ENCODE measurements at regions of chr7 and their contacts with region 1.

Region 1: DNA sequence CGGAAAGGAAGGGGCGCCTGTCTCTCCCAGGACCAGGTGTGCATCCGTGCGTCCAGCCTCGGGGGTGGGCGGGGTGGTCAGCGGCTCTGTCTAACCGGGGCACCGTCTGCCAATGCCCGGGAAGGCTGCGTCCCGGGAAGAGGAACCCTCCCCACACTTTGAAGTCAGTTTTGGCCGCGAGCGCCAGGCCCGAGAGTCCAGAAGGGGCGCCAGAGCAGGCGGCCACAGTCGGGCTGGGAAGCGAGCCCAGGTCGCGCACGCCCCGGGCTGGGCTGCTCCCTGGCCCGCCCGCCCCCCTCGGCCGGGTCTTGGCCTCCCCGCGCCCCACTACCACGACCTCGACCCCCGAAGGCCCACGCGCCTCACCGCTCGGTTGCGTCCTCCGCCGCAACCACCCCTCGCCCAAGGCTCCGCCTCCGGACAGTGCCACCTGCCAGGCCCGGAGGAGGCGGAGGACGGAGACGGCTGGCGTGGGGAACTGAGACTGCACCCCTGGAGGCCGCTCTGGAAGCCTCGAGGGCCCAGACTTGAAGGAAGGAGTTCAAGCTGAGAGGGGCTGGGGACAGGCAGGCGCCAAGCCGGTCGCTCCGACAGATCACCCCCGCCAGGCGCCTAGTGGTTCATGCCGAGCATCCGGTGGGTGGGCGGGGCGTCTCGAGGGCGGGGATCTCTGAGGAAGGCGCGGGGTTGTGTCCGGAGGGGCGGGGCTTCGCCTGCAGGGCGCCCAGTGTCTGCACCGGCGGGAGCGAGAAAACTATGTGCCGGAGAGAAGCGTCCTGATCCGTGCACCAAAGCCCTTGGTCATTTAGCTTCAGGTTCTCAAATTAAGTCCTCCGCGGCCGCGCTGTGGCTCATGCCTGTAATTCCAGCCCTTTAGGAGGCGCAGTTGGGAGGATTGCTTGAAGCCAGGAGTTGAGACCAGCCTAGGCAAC is at the start of gene BRAT1:
- DNase-seq: peak; percentile 98 to 99
- H3K4me3 ChIP-seq: peak within 1 kb of the TSS; percentile 65 to 83 (median 80)
- H3K27ac ChIP-seq: peak within 1 kb of the TSS; percentile 97 to 99 (median 98)
- H3K4me1 ChIP-seq: peaks cover 17 to 26% of the 10 kb centered on the region in 2 donors
- H3K27me3 ChIP-seq: no peaks in the 10 kb centered on the region
- CTCF ChIP-seq: peak in 4 of 6 experiments; percentile 6 to 51 (median 20)
- POLR2A ChIP-seq: peak in 1 of 2 donors; percentile 68
- total RNA-seq, gene BRAT1: 37.2 to 51.8 (median 45.6) TPM

Region 2: DNA sequence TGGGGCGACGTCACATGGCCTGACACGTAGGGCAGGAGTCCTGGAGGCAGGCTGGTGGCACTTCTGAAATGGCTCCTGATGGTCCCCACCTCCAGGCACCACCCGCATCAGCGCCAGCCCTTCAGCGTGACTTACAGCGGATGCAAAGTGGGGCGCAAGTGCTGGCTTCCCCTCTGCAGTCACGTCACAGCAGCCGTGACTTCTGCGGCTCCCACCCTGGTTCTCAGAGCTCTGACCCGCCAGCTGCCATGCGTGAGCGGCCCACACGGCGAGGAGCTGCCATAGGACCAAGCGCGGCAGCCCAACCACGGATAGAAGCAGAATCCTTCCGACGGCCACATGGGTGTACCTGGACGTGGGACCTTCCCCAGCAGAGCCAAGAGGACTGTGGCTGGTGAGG is 726.3 kb before region 1 on chr7:
- intact Hi-C with region 1: no loop called
- DNase-seq: no peak
- H3K4me3 ChIP-seq: no peak overlapping the region
- H3K27ac ChIP-seq: no peak overlapping the region
- H3K4me1 ChIP-seq: no peaks in the 10 kb centered on the region
- H3K27me3 ChIP-seq: no peaks in the 10 kb centered on the region
- CTCF ChIP-seq: no peak
- POLR2A ChIP-seq: no peak

Region 3: DNA sequence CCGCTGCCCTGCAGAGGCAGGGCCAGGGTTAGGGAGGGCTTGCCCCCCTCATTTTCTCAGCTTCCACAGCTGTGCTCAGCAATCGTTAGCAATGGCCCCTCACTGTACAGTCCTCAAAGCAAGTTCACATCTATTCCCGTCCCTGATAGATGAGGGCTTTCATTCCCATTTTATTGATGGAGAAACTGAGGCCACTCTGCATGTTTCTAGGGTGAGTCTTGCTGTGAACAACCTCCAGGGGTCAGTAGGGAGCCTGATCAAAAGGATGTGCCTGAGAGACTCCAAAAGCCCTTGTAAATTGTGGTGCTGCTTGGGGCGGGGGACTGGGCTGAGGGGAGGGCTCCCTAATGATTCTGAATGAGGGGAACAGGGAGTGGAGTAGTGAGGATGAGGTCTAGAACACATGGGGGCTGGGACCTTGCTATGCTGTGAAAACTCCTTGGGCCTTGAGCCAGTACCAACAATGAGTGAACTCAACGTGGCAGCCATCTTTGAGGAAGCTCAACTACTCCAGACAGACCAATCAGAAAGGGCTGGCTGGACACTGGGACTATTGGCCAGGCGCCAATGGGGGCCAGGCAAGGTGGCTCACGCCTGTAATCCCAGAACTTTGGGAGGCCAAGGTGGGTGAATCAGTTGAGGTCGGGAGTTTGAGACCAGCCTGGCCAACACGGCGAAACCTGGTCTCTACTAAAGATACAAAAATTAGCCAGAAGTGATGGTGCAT is 72.5 kb before region 1 on chr7:
- intact Hi-C with region 1: loop called (anchors 5 kb)
- DNase-seq: no peak
- H3K4me3 ChIP-seq: no peak overlapping the region
- H3K27ac ChIP-seq: no peak overlapping the region
- H3K4me1 ChIP-seq: peaks cover 0 to 18% of the 10 kb centered on the region in 2 donors
- H3K27me3 ChIP-seq: no peaks in the 10 kb centered on the region
- CTCF ChIP-seq: no peak
- POLR2A ChIP-seq: no peak

Region 4: GRCh38 chr7:2641406-2642393 is 86.3 kb after region 1 on chr7:
- intact Hi-C with region 1: loop called (anchors 5 kb)
- DNase-seq: peak; percentile 99
- H3K4me3 ChIP-seq: no peak overlapping the region
- H3K27ac ChIP-seq: peak overlapping the region; percentile 95 to 98 (median 98)
- H3K4me1 ChIP-seq: peaks cover 42 to 78% of the 10 kb centered on the region in 2 donors
- H3K27me3 ChIP-seq: no peaks in the 10 kb centered on the region
- CTCF ChIP-seq: peak in 2 of 6 experiments; percentile 6 to 31
- POLR2A ChIP-seq: peak in 1 of 2 donors; percentile 62

Region 5: GRCh38 chr7:2844165-2844898 is 288.9 kb after region 1 on chr7 and contains the start of gene GNA12:
- intact Hi-C with region 1: loop called (anchors 10 kb)
- DNase-seq: peak; percentile 100
- H3K4me3 ChIP-seq: peak within 1 kb of the TSS in 2 of 3 donors; percentile 29 to 85
- H3K27ac ChIP-seq: peak within 1 kb of the TSS in 1 of 3 donors; percentile 36
- H3K4me1 ChIP-seq: peaks cover 8 to 13% of the 10 kb centered on the region in 2 donors
- H3K27me3 ChIP-seq: no peaks in the 10 kb centered on the region
- CTCF ChIP-seq: no peak
- POLR2A ChIP-seq: peak in 1 of 2 donors; percentile 83
- total RNA-seq, gene GNA12: 17.9 to 33.3 (median 21.7) TPM

Measured in thyroid gland (tissue), 4 donors.